PC-9 (cell line): ENCODE measurements at regions of chr2 and their contacts with region 1.

Region 1: DNA sequence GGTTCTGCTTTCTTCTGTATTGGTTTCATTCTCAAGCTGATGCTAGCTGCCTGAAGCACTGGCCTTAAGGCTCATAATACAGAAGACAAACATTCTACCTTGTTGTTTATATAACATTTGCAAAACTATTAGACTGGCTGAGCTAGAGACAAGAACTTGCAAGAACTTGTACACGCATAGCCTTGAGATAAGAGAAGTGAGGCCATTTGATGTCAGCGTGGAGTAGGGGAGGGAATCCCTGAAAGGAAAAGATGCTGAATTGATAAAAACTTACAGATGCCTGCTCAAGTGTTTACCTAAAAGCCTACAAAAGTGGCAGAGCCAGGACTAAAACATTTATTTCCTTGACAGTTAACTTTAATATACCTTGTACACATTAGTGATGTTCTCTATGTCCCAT is 119.8 kb upstream of the FANCL start:
- DNase-seq: no peak
- H3K4me3 ChIP-seq: no peak overlapping the region
- H3K27ac ChIP-seq: no peak overlapping the region
- H3K4me1 ChIP-seq: no peaks in the 10 kb centered on the region
- H3K27me3 ChIP-seq: no peaks in the 10 kb centered on the region
- CTCF ChIP-seq: no peak

Region 2: DNA sequence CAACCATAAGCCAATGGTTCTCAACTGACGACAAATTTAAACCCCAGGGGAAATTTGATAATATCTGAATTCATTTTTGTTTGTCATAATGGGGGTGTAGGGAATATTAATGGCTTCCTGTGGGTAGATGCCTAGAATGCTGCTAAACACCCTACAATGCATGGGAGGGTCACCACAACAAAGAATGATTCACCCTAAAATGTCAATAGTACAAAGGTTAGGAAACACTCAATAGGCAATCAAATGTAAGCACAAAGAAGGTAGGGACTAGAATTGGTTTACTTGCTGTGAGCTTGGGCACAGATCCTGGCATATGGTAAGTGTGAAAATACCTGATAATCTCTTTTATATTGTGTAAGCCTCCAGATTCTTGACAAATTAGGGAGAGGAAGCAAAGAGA is 99.7 kb before region 1 on chr2:
- CTCF ChIA-PET with region 1: no interaction called
- POLR2A ChIA-PET with region 1: interaction called, 14 read pairs
- intact Hi-C with region 1: no loop called
- DNase-seq: no peak
- H3K4me3 ChIP-seq: no peak overlapping the region
- H3K27ac ChIP-seq: no peak overlapping the region
- H3K4me1 ChIP-seq: no peaks in the 10 kb centered on the region
- H3K27me3 ChIP-seq: no peaks in the 10 kb centered on the region
- CTCF ChIP-seq: no peak